ENCODE measurements at regions of chr18 and their contacts with region 1.

Region 1: DNA sequence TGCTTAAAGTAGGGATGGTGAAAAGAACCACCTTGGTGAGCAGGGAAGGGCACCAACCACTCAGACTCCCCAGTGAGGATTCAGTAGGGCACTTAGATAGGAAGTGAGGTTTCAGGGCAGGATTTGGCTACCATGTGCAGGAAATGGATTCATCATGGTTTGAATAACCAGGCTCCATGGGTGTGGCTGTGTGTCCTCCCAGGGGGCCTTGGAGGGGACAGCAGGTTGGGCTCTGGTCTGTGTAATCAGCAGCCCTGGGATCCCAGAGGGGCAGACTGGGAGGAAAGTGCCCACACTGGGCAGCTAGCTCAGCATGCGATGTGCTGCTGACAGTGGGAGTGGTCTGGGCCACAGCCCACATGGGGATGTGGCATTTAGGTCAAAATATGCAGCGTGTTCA is 224.6 kb downstream of the CELF4 start:
- DNase-seq: no peak
- H3K4me3 ChIP-seq: no peak overlapping the region
- H3K27ac ChIP-seq: no peak overlapping the region
- H3K4me1 ChIP-seq: peaks cover 0 to 4% (median 2%) of the 10 kb centered on the region in 4 experiments; a peak in 4 of 7 replicates
- H3K27me3 ChIP-seq: peaks cover 0 to 8% (median 0%) of the 10 kb centered on the region in 4 experiments; a peak in 1 of 7 replicates
- CTCF ChIP-seq: no peak
- EP300 ChIP-seq: no peak
- POLR2A ChIP-seq: no peak
- RAD21 ChIP-seq: no peak

Region 2: GRCh38 chr18:37230768-37231167 is 110.2 kb before region 1 on chr18:
- CTCF ChIA-PET with region 1: no interaction called
- POLR2A ChIA-PET with region 1: no interaction called
- DNase-seq: no peak
- H3K4me3 ChIP-seq: no peak overlapping the region
- H3K27ac ChIP-seq: no peak overlapping the region
- H3K4me1 ChIP-seq: 0 out of 7 replicates have a peak, but pooled peaks cover 0 to 2% (median 0%) of the 10 kb centered on the region in 4 experiments
- H3K27me3 ChIP-seq: no peaks in the 10 kb centered on the region; a peak in 1 of 7 replicates
- CTCF ChIP-seq: no peak
- EP300 ChIP-seq: no peak
- POLR2A ChIP-seq: no peak
- RAD21 ChIP-seq: no peak

Region 3: GRCh38 chr18:37299471-37300304 is 41.3 kb before region 1 on chr18:
- CTCF ChIA-PET with region 1: interaction called, 10 read pairs
- POLR2A ChIA-PET with region 1: no interaction called
- DNase-seq: no peak
- H3K4me3 ChIP-seq: no peak overlapping the region
- H3K27ac ChIP-seq: no peak overlapping the region
- H3K4me1 ChIP-seq: no peaks in the 10 kb centered on the region; a peak in 1 of 7 replicates
- H3K27me3 ChIP-seq: no peaks in the 10 kb centered on the region
- CTCF ChIP-seq: no peak
- EP300 ChIP-seq: no peak
- POLR2A ChIP-seq: no peak
- RAD21 ChIP-seq: no peak

Region 4: DNA sequence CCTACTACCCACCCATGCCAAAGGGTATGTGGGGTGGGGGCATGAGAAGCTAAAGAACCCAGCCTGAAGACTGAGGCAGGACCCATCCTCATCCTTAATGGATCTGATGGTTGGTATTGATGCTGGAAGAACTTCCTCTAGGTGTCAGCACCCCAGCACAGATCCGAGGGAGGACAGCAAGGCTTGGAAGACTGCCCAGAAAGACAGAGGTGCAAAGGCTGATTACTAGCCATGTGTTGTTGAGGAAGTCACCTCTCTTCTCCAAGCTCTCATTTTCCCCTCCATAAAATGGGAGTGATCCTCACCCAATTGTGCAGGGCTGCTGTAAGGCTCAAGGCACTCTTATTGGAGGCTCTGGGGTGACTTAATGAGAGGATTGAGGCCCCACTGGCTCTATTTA is 32.0 kb before region 1 on chr18:
- CTCF ChIA-PET with region 1: interaction called, 11 read pairs
- POLR2A ChIA-PET with region 1: no interaction called
- DNase-seq: no peak
- H3K4me3 ChIP-seq: no peak overlapping the region
- H3K27ac ChIP-seq: no peak overlapping the region
- H3K4me1 ChIP-seq: peaks cover 0 to 6% (median 0%) of the 10 kb centered on the region in 4 experiments; a peak in 2 of 7 replicates
- H3K27me3 ChIP-seq: no peaks in the 10 kb centered on the region
- CTCF ChIP-seq: peak in 1 of 3 experiments; percentile 9; a peak in 1 of 4 replicates
- EP300 ChIP-seq: no peak
- POLR2A ChIP-seq: no peak
- RAD21 ChIP-seq: 0 out of 4 replicates have a peak, but pooled peaks of 1 of the 2 experiments have one; percentile 3

Region 5: GRCh38 chr18:37355772-37356171 is 14.8 kb after region 1 on chr18:
- CTCF ChIA-PET with region 1: interaction called, 48 read pairs
- POLR2A ChIA-PET with region 1: no interaction called
- DNase-seq: no peak
- H3K4me3 ChIP-seq: no peak overlapping the region
- H3K27ac ChIP-seq: no peak overlapping the region
- H3K4me1 ChIP-seq: peaks cover 2 to 3% (median 2%) of the 10 kb centered on the region in 4 experiments; a peak in 4 of 7 replicates
- H3K27me3 ChIP-seq: peaks cover 0 to 22% (median 16%) of the 10 kb centered on the region in 4 experiments; a peak in 6 of 7 replicates
- CTCF ChIP-seq: no peak
- EP300 ChIP-seq: no peak
- POLR2A ChIP-seq: no peak
- RAD21 ChIP-seq: no peak

Region 6: GRCh38 chr18:37422116-37422515 is 81.1 kb after region 1 on chr18:
- CTCF ChIA-PET with region 1: interaction called, 12 read pairs
- POLR2A ChIA-PET with region 1: no interaction called
- DNase-seq: no peak
- H3K4me3 ChIP-seq: no peak overlapping the region
- H3K27ac ChIP-seq: no peak overlapping the region
- H3K4me1 ChIP-seq: peaks cover 0 to 15% (median 6%) of the 10 kb centered on the region in 4 experiments; a peak in 3 of 7 replicates
- H3K27me3 ChIP-seq: no peaks in the 10 kb centered on the region; a peak in 3 of 7 replicates
- CTCF ChIP-seq: no peak
- EP300 ChIP-seq: no peak
- POLR2A ChIP-seq: no peak
- RAD21 ChIP-seq: no peak

Region 7: DNA sequence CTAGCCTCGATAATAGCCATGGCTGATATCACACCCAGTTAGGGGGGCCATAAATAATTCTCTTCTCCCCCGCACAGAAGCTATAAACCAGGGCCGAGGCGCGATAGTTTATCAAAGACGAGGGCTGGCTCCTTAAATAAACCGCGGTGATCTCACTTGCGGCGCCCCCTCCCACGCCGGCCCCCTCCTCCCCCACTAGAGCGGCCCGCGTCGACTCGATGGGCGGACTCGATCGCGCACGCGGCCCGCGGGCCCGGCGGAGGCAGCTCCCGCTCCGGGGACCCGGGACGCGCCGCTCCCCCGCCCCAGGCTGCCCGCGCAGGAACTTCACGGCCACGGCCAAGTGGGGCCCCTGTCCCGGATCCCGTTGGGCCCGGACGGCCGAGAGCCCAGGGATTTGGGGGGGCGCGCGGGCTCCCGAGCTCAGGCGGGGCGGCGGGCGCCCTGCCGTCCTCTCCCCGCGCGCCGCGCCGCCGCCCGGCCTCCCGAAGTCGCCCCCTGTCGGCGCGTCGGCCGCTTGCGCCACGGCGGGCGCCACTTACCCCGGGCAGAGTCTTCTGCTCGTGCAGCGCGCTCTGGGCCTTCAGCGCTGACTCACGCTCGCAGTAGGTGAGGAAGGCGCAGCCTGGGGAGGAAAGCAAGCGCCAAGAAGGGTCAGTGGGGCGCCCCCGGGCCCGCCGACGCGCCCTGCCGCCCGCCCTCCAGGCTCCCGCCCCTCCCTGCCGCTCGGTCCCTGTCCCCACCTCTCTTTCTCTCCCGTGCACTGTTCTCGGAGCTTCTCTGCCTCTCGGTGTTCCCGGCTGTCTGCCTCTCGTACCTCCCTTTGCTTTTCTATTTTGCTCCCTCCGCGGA is 144.2 kb after region 1 on chr18:
- CTCF ChIA-PET with region 1: interaction called, 13 read pairs
- POLR2A ChIA-PET with region 1: interaction called, 3 read pairs
- DNase-seq: peak; percentile 43 to 77
- H3K4me3 ChIP-seq: peak overlapping the region; percentile 7 to 60 (median 36); a peak in 7 of 8 replicates
- H3K27ac ChIP-seq: no peak overlapping the region
- H3K4me1 ChIP-seq: peaks cover 3 to 33% (median 21%) of the 10 kb centered on the region in 4 experiments
- H3K27me3 ChIP-seq: peaks cover 0 to 34% (median 24%) of the 10 kb centered on the region in 4 experiments; a peak in 6 of 7 replicates
- CTCF ChIP-seq: peak; percentile 57 to 79 (median 66)
- EP300 ChIP-seq: no peak
- POLR2A ChIP-seq: no peak
- RAD21 ChIP-seq: peak in 1 of 2 experiments; percentile 43; a peak in 2 of 4 replicates

Region 8: DNA sequence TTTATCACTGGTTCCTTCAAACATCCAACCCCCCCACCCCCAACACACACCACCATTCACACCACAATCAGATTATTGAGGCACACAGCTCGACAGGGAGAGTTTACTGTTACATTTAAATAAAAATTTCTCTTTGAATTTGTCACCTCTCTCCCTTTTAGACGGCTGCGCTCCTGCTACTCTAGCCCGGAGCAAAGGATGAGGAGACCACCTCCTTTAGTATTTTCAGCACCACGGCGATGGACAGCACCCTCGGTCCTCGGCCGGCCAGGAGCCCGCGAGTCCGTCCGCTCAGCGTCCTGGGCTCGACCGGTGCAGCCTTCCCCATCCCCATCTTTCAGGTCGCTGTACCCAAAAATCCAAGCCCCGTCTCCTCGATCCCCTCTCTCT is 223.7 kb after region 1 on chr18:
- CTCF ChIA-PET with region 1: no interaction called
- POLR2A ChIA-PET with region 1: no interaction called
- DNase-seq: peak in 1 of 2 experiments; percentile 92
- H3K4me3 ChIP-seq: peak overlapping the region; percentile 84 to 87 (median 86); a peak in 7 of 8 replicates
- H3K27ac ChIP-seq: no peak overlapping the region
- H3K4me1 ChIP-seq: peaks cover 0 to 7% (median 2%) of the 10 kb centered on the region in 4 experiments; a peak in 3 of 7 replicates
- H3K27me3 ChIP-seq: peaks cover 37 to 66% (median 59%) of the 10 kb centered on the region in 4 experiments
- CTCF ChIP-seq: no peak
- EP300 ChIP-seq: no peak
- POLR2A ChIP-seq: no peak
- RAD21 ChIP-seq: 0 out of 4 replicates have a peak, but pooled peaks of 1 of the 2 experiments have one; percentile 5